Activated CD8-positive, alpha-beta memory T cell treated with anti-CD3 and anti-CD28 coated beads, Interleukin-2, amount 10 ng/mL, durations not matched to agents 7 days and 5 days (primary cell): ENCODE measurements at regions of chr2 and their contacts with region 1.

Region 1: GRCh38 chr2:174615871-174616436 is 18.4 kb upstream of the WIPF1 start:
- DNase-seq: peak; percentile 50
- ATAC-seq: peak; percentile 29
- H3K4me3 Mint-ChIP-seq: peak overlapping the region; percentile 9
- H3K27ac Mint-ChIP-seq: peak overlapping the region; percentile 78
- H3K4me1 Mint-ChIP-seq: peaks cover 87% of the 10 kb centered on the region
- H3K27me3 Mint-ChIP-seq: no peaks in the 10 kb centered on the region

Region 2: GRCh38 chr2:174593574-174594203 is 22.3 kb before region 1 on chr2:
- CTCF ChIA-PET with region 1: interaction called, 28 read pairs
- DNase-seq: peak; percentile 88
- ATAC-seq: peak; percentile 74
- H3K4me3 Mint-ChIP-seq: peak overlapping the region; percentile 91
- H3K27ac Mint-ChIP-seq: peak overlapping the region; percentile 95
- H3K4me1 Mint-ChIP-seq: peaks cover 48% of the 10 kb centered on the region
- H3K27me3 Mint-ChIP-seq: no peaks in the 10 kb centered on the region

Region 3: DNA sequence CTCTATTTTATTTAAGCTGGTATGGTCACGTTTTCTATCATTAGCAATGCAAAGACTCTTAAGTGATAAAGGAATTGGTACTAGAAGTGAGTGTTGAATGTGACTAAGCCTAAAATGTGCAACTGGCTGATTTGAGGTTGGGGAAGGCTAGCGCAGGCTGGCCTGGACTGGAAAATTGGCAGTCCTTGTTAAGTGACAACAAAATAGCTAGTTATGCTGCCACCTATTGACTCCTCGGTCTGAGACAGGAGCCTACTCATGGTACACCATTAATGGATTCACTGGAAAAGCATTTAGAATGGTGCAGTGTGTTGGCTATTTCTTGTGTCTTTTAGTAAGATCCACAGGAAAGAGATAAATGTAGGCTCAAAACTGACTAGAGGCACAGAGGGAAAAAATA is 12.7 kb before region 1 on chr2:
- CTCF ChIA-PET with region 1: interaction called, 28 read pairs
- DNase-seq: peak; percentile 74
- ATAC-seq: peak; percentile 70
- H3K4me3 Mint-ChIP-seq: no peak overlapping the region
- H3K27ac Mint-ChIP-seq: peak overlapping the region; percentile 66
- H3K4me1 Mint-ChIP-seq: peaks cover 89% of the 10 kb centered on the region
- H3K27me3 Mint-ChIP-seq: no peaks in the 10 kb centered on the region

Region 4: DNA sequence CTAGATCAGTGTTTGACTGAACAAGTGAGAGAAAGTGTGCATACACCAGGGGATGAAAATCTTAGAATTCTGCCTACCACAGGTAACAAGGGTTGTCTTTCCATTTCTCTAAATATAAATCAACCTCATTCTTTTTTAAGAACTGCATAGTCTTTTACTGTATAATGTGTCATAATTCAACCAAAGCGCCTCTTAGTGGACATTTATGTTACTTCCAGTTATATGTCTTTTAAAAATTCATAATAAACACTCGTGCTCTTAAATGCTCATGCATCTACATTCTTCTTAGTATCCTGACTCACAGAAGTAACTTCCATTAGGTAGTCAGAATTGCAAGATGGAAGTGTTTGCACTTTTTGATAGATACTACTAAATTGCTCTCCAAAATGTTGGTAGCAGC is 72.1 kb after region 1 on chr2:
- CTCF ChIA-PET with region 1: interaction called, 122 read pairs
- DNase-seq: no peak
- ATAC-seq: peak; percentile 54
- H3K4me3 Mint-ChIP-seq: no peak overlapping the region
- H3K27ac Mint-ChIP-seq: no peak overlapping the region
- H3K4me1 Mint-ChIP-seq: peaks cover 38% of the 10 kb centered on the region
- H3K27me3 Mint-ChIP-seq: no peaks in the 10 kb centered on the region